CD8-positive, alpha-beta memory T cell (primary cell): ENCODE measurements at regions of chr20 and their contacts with region 1.

Region 1: GRCh38 chr20:33621717-33622400 is 40.3 kb upstream of the C20orf144 start:
- DNase-seq: no peak
- H3K4me3 ChIP-seq: no peak overlapping the region
- H3K4me3 Mint-ChIP-seq: no peak overlapping the region
- H3K27ac ChIP-seq: no peak overlapping the region
- H3K27ac Mint-ChIP-seq: peak overlapping the region in 4 of 8 donors; percentile 12 to 89 (median 36)
- H3K4me1 ChIP-seq: peaks cover 26% of the 10 kb centered on the region
- H3K4me1 Mint-ChIP-seq: peaks cover 38 to 54% (median 52%) of the 10 kb centered on the region in 3 donors
- H3K27me3 ChIP-seq: no peaks in the 10 kb centered on the region
- H3K27me3 Mint-ChIP-seq: no peaks in the 10 kb centered on the region

Region 2: DNA sequence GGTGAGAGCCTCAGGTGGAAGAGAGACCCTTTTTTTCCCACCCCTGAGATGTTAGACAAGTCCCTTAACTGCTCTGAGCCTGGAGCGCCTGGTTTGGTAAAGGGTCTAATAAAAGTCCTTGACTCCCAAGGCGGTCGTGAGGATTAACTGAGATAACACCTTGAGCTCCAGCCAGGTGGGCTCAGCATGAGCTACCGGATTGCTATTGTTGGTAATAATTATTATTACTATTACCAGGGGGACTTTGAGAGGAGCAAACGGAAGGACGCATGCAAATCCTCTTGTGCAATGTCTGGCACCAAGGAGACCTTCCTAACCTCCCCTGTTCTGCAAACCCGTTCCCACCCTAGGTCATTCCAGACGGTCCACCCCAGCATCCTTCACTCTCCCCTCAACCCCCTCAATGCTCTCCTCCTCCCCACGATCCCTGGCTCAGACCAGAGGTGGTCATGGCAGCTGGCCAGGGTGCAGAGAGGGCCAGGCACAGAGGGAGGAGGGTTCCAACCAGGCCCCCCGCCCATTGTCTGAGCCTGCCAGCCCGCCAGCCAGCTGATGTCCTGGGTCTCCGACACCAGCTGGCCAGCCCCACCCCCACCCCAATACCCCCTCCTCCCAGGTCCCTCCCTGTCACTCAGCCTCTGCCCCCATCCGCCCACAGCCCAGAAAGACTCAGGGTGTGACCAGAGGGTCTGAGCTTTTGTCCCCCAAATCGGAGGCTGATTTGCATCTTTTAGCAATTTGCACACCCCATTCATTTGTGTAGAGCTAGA is 146.3 kb before region 1 on chr20:
- CTCF ChIA-PET with region 1: no interaction called
- POLR2A ChIA-PET with region 1: no interaction called
- DNase-seq: no peak
- H3K4me3 ChIP-seq: no peak overlapping the region
- H3K4me3 Mint-ChIP-seq: no peak overlapping the region
- H3K27ac ChIP-seq: no peak overlapping the region
- H3K27ac Mint-ChIP-seq: no peak overlapping the region
- H3K4me1 ChIP-seq: no peaks in the 10 kb centered on the region
- H3K4me1 Mint-ChIP-seq: no peaks in the 10 kb centered on the region
- H3K27me3 ChIP-seq: no peaks in the 10 kb centered on the region
- H3K27me3 Mint-ChIP-seq: peaks cover 0 to 3% of the 10 kb centered on the region in 2 donors

Region 3: DNA sequence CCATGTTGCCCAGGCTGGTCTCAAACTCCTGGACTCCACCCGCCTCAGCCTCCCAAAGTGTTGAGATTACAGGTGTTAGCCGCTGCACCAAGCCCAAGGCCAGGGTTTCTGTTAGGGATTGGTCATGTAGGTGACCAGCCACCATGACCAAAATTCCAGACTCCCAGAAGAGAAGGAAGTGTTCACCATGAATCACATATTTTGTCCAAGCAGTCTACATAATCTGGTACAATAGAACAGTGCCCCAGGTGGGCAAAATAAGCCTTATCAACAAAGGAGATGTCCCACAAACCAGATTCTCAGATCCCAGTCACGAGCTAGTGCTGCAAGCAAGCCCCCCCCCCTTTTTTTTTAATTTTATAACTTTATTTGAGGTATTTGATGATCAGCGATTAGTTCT is 129.9 kb after region 1 on chr20:
- CTCF ChIA-PET with region 1: no interaction called
- POLR2A ChIA-PET with region 1: no interaction called
- DNase-seq: no peak
- H3K4me3 ChIP-seq: no peak overlapping the region
- H3K4me3 Mint-ChIP-seq: no peak overlapping the region
- H3K27ac ChIP-seq: no peak overlapping the region
- H3K27ac Mint-ChIP-seq: peak overlapping the region in 1 of 8 donors; percentile 15
- H3K4me1 ChIP-seq: no peaks in the 10 kb centered on the region
- H3K4me1 Mint-ChIP-seq: peaks cover 0 to 7% (median 6%) of the 10 kb centered on the region in 3 donors
- H3K27me3 ChIP-seq: no peaks in the 10 kb centered on the region
- H3K27me3 Mint-ChIP-seq: no peaks in the 10 kb centered on the region

Region 4: DNA sequence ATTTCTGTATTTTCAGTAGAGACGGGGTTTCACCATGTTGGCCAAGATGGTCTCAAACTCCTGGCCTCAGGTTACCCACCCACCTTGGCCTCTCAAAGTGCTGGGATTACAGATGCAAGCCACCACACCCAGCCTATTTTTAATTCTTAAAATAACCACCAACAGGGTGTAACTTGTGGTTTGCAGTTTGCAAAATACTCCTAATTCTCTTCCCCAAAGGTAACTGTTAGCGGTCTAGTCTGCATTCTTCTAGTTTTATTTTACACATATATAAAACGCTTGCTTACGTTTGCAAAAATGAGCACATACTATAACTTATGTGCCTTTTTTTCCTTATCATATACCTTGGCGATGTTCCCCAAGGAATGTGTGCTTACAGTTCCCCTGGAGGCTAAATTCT is 163.6 kb after region 1 on chr20:
- CTCF ChIA-PET with region 1: no interaction called
- POLR2A ChIA-PET with region 1: interaction called, 11 read pairs
- DNase-seq: no peak
- H3K4me3 ChIP-seq: no peak overlapping the region
- H3K4me3 Mint-ChIP-seq: peak overlapping the region in 4 of 7 donors; percentile 12 to 59 (median 50)
- H3K27ac ChIP-seq: no peak overlapping the region
- H3K27ac Mint-ChIP-seq: peak overlapping the region in 3 of 8 donors; percentile 23 to 74 (median 41)
- H3K4me1 ChIP-seq: peaks cover 6% of the 10 kb centered on the region
- H3K4me1 Mint-ChIP-seq: peaks cover 17 to 59% (median 36%) of the 10 kb centered on the region in 3 donors
- H3K27me3 ChIP-seq: no peaks in the 10 kb centered on the region
- H3K27me3 Mint-ChIP-seq: no peaks in the 10 kb centered on the region